Natural killer cell (primary cell): ENCODE measurements at regions of chr3 and their contacts with region 1.

Region 1: DNA sequence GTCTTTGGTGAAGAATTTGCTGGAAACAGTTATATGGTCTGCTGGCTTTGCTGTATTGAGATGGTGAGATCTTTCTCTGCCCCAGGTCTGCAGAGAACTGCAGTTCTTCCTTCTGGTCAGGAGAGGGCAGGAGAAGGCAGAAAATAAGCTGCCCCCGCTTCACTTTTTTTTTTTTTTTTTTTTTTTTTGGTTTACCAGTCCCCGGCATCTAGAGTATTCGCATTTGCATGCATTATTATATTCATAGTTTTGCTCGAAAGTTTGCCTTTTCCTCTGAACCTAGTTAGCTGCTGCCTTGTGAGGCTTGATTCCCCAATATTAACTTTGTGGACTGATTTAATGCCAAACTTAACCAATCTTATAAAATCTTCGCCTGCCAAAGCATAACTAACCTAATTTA is 10.6 kb upstream of the PARL start:
- DNase-seq: peak in 1 of 2 donors; percentile 74
- ATAC-seq: peak; percentile 81 to 99 (median 92)
- H3K4me3 ChIP-seq: no peak overlapping the region
- H3K4me3 Mint-ChIP-seq: no peak overlapping the region
- H3K27ac ChIP-seq: no peak overlapping the region
- H3K27ac Mint-ChIP-seq: no peak overlapping the region
- H3K4me1 ChIP-seq: no peaks in the 10 kb centered on the region
- H3K4me1 Mint-ChIP-seq: no peaks in the 10 kb centered on the region
- H3K27me3 ChIP-seq: no peaks in the 10 kb centered on the region
- H3K27me3 Mint-ChIP-seq: peaks cover 15 to 17% of the 10 kb centered on the region in 2 donors
- CTCF ChIP-seq: peak; percentile 72

Region 2: GRCh38 chr3:183710231-183710630 is 185.1 kb before region 1 on chr3:
- intact Hi-C with region 1: no loop called
- DNase-seq: no peak
- ATAC-seq: no peak
- H3K4me3 ChIP-seq: no peak overlapping the region
- H3K4me3 Mint-ChIP-seq: no peak overlapping the region
- H3K27ac ChIP-seq: no peak overlapping the region
- H3K27ac Mint-ChIP-seq: no peak overlapping the region
- H3K4me1 ChIP-seq: no peaks in the 10 kb centered on the region
- H3K4me1 Mint-ChIP-seq: peaks cover 4 to 16% of the 10 kb centered on the region in 2 donors
- H3K27me3 ChIP-seq: no peaks in the 10 kb centered on the region
- H3K27me3 Mint-ChIP-seq: no peaks in the 10 kb centered on the region
- CTCF ChIP-seq: no peak

Region 3: DNA sequence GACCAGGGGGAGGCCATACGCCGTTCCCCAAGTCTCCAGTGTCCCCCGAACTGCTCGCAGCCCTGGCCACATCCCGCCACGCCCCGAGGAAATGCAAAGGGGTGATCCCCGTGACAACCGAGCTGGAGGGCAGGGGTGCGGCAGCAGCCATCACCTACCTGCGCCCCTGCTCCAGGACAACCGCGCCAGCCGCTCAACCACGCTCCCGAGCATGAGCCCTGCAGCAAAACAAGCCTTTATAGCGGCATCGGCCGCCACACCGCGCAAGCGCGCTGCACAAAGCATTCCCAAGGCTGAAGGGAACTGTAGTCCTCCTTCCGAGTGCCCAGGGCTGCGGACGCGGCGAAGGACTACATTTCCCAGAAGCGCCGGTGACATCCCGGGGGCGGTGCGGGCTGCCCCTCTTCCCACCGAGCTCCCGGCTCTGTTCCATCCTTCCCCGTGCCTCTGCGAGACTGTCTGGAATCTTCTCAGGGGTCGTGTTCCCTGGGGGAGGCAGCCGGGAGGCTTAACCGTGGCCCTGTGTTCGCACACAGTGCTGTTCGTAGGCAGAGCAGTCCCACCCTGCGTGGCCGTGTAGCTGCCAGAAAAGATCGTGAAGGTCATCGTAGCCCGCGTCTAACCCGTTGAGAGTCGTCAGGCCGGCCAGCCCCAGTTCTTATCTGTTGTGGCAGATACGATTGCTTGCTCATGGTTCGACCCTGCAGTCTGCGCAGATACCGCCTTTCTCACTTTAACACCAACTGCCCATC is 122.6 kb after region 1 on chr3 and contains the start of gene ABCC5:
- intact Hi-C with region 1: loop called (anchors 2 kb)
- DNase-seq: peak; percentile 68 to 91
- ATAC-seq: peak; percentile 96 to 97 (median 97)
- H3K4me3 ChIP-seq: peak within 1 kb of the TSS; percentile 80
- H3K4me3 Mint-ChIP-seq: peak within 1 kb of the TSS; percentile 100
- H3K27ac ChIP-seq: peak within 1 kb of the TSS; percentile 32
- H3K27ac Mint-ChIP-seq: peak within 1 kb of the TSS; percentile 84 to 88
- H3K4me1 ChIP-seq: peaks cover 15% of the 10 kb centered on the region
- H3K4me1 Mint-ChIP-seq: peaks cover 24% of the 10 kb centered on the region in 2 donors
- H3K27me3 ChIP-seq: no peaks in the 10 kb centered on the region
- H3K27me3 Mint-ChIP-seq: peaks cover 5 to 14% of the 10 kb centered on the region in 2 donors
- CTCF ChIP-seq: peak; percentile 77
- total RNA-seq, gene ABCC5: 15.6 to 32.5 (median 27.1) TPM

Region 4: DNA sequence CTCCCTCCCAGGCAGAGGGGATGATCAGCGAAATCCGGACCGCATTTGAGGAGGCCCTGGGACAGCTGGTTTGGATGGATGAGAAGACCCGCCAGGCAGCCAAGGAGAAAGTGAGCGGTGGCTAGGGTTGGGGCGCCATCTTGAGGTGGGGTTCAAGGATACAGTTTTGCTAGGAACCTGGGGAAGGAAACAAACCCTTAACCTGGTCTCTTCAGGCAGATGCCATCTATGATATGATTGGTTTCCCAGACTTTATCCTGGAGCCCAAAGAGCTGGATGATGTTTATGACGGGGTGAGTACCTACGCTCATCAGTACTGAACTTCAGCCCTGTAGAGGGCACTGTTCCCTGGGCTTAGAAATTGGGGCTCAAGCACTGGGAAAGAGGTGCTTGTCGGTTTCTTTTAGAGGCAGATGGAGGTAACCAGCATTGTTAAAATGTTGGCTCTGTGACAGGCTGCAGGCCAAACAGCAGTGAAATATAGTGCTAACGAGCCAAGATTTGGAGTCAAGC is 394.2 kb after region 1 on chr3:
- intact Hi-C with region 1: loop called (anchors 5 kb)
- DNase-seq: peak; percentile 28 to 71
- ATAC-seq: peak; percentile 53 to 63 (median 62)
- H3K4me3 ChIP-seq: no peak overlapping the region
- H3K4me3 Mint-ChIP-seq: no peak overlapping the region
- H3K27ac ChIP-seq: no peak overlapping the region
- H3K27ac Mint-ChIP-seq: no peak overlapping the region
- H3K4me1 ChIP-seq: no peaks in the 10 kb centered on the region
- H3K4me1 Mint-ChIP-seq: no peaks in the 10 kb centered on the region
- H3K27me3 ChIP-seq: no peaks in the 10 kb centered on the region
- H3K27me3 Mint-ChIP-seq: peaks cover 14 to 20% of the 10 kb centered on the region in 2 donors
- CTCF ChIP-seq: peak; percentile 46

Region 5: DNA sequence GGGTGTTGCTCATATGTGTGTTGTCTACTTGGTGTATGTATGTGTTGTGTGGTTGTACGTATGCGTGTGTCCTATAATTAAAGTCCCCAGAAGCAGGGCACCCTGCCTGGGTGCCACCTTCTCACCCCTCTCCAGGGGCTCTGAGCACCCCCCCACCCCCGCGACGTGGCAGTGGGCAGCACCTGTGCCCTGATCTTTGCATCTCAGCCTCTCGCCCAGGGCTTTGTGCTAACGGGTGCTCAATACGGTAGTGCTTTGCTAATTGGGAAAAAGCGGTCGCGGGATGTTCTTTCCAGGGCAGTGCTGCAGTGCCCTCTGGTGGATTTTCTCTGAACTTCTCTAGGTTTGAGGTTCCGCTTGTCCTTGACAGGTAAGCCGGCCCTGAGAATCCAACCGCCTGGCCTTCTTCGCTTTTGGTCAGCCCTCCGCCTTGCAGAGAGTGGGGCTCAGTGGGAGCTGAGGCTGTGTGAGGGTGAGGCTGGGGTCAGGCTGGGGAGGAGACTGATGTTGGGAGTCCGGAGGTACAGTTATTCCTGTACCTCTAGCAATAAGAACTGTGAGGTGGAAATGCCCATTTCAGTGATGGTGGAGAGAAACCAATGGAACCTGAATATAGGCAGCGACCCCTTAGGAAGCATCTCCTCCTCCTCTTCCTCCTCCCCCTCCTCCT is 648.7 kb after region 1 on chr3:
- intact Hi-C with region 1: loop called (anchors 2 kb)
- DNase-seq: peak; percentile 57 to 87
- ATAC-seq: peak; percentile 79 to 93 (median 89)
- H3K4me3 ChIP-seq: no peak overlapping the region
- H3K4me3 Mint-ChIP-seq: no peak overlapping the region
- H3K27ac ChIP-seq: no peak overlapping the region
- H3K27ac Mint-ChIP-seq: peak overlapping the region in 1 of 2 donors; percentile 52
- H3K4me1 ChIP-seq: peaks cover 9% of the 10 kb centered on the region
- H3K4me1 Mint-ChIP-seq: peaks cover 8 to 9% of the 10 kb centered on the region in 2 donors
- H3K27me3 ChIP-seq: peaks cover 5% of the 10 kb centered on the region
- H3K27me3 Mint-ChIP-seq: peaks cover 42 to 48% of the 10 kb centered on the region in 2 donors
- CTCF ChIP-seq: peak; percentile 82